GM10248 (cell line): ENCODE measurements at regions of chr18 and their contacts with region 1.

Region 1: DNA sequence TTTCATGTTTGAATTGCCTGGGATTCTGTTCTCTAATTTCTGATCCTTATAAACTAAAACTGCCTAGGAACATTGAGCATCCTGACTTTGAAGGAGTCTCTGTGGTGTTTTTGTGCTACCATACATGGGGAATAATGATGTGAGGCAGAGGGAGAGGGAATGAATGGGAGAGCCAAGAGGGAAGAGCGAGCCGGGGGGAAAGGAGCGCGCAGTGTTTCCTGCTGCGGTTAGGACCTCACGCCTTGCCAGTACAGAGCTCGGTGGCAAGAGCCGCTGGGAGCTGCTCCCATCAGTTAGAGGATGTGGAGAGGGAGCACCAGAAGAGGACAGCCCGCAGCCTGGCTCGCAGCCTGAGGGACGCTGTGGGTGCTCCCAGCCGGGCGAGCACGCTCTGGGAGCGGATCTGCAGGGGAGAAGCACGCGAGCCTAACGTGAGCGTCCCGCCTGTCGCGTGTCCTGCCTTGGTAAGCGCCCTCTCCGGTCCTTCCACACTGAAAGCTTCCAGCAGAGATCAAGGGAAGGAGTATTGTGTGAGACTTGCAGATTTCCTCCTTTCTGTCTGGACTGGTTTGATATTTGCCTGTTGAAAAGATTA is 114.7 kb downstream of the FAM210A start:
- DNase-seq: no peak
- CTCF ChIP-seq: no peak

Region 2: GRCh38 chr18:13558124-13558523 is 53.6 kb before region 1 on chr18:
- CTCF ChIA-PET with region 1: interaction called, 112 read pairs
- POLR2A ChIA-PET with region 1: interaction called, 51 read pairs
- DNase-seq: peak; percentile 76
- CTCF ChIP-seq: peak; percentile 72

Region 3: DNA sequence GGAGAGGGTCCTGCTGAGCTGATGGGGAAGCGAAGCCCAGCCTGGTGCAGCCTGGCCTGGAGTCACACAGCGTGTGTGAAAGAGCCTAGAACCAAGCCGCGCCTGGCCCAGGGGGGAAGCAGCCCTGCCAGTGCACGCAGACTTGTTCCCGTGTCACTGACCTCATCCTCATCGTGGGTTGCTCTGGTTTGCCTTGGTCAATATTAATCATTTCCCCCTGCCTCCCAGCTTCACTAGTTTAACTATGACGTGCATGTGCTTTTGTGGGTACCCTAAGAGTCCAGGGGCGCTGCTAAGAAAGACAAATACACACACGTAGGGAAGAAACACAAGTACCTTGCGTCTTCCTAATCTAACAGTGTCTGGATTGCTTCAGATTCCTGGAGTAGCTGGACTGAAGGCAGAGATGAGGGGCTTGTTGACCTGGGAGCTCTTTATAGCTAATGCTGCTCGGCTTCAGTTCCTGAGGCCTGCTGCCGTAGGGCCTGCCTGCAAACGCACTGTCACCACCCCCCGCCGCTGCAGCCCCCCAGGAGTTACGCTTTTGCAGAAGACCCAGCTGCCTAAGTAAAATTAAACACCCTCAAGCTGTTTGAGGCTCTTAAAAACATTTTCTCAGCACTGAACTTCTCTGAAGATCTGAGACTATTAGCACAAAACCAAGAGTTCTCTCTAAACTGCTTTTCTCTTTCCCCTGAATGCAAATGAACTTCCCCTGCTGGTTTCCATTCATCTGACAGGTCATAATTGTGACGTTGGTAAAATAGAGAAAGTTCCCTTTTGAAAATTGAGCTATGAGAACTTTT is 44.6 kb before region 1 on chr18:
- CTCF ChIA-PET with region 1: interaction called, 112 read pairs
- POLR2A ChIA-PET with region 1: interaction called, 159 read pairs
- DNase-seq: peak; percentile 79
- CTCF ChIP-seq: no peak

Region 4: DNA sequence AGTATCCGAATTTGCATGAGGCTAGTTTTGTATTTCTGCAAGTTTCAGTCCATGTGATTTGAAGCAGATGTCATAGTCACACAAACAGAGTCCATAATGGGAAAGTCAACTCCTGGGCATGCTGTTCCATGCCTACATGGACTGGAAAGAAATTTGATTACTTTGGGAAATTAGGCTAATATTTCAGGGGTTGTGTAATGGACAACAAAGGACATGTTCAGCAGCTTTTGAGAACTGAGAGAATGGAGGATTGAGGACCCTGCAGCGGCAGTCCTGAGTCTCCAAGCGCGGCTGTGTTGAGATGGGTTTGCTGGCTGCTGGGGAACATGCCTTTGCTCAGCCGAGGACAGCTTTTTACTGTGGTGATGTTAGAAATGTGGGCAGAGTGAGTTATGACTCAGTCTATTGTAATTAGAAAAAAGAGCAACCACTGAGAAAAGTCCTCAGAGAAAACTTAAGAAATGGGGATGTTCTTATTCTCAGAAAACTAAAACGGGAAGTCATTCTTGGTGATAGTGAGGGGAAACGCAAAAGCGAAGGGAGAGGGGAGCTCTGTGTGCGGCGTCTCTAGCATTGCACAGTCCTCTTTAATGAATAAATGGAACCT is 34.5 kb before region 1 on chr18:
- CTCF ChIA-PET with region 1: interaction called, 13 read pairs
- POLR2A ChIA-PET with region 1: interaction called, 24 read pairs
- DNase-seq: peak; percentile 74
- CTCF ChIP-seq: no peak

Region 5: DNA sequence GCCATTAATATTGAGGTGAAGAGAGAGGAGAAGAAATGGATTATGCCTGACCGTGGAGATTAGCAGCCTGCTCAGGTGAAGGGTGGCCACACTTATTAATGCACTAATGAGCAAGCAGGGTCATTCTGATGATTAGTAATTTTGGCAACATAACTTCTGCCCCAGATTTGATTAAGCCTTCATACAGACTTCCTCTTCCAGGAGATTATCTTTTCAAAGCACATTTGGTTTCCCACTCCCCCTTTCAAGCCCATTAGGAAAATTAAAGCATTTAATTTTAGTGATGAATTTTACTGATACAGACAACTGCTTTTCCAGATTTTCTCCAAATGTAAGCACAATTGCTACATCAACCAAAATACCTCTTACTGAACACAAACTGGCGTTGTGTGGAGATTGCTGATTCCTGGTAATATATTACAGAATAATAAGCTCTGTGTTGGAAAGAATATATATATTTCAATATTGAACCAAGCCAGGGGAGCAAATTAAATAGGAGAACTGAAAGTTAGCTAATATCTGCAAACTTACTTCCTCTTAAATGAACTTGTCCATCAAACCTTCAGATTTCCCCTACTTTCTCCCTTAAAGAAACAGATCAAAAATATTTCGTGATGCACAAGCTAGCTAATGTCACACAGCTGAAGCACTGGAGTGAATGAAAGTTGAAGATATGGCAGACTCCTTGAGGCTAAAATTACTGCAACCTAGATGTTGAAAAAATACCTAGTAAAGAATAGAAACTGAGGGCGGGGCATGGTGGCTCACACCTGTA is 26.1 kb before region 1 on chr18:
- CTCF ChIA-PET with region 1: interaction called, 29 read pairs
- POLR2A ChIA-PET with region 1: interaction called, 7 read pairs
- DNase-seq: peak; percentile 57
- CTCF ChIP-seq: no peak

Region 6: GRCh38 chr18:13597068-13597467 is 14.6 kb before region 1 on chr18:
- CTCF ChIA-PET with region 1: interaction called, 14 read pairs
- POLR2A ChIA-PET with region 1: no interaction called
- DNase-seq: no peak
- CTCF ChIP-seq: no peak

Region 7: GRCh38 chr18:13629841-13630715 is 18.4 kb after region 1 on chr18:
- CTCF ChIA-PET with region 1: interaction called, 16 read pairs
- POLR2A ChIA-PET with region 1: no interaction called
- DNase-seq: peak; percentile 82
- CTCF ChIP-seq: peak; percentile 63